Sigmoid colon (tissue), 7 donors: ENCODE measurements at regions of chr15 and their contacts with region 1.

Region 1: GRCh38 chr15:60592371-60593169 is 113.6 kb upstream of the ICE2 start:
- DNase-seq: peak; percentile 94
- H3K4me3 ChIP-seq: peak overlapping the region; percentile 73 to 93 (median 81)
- H3K27ac ChIP-seq: peak overlapping the region; percentile 84 to 95 (median 90)
- H3K4me1 ChIP-seq: peaks cover 0 to 23% (median 14%) of the 10 kb centered on the region in 4 donors
- H3K27me3 ChIP-seq: no peaks in the 10 kb centered on the region
- CTCF ChIP-seq: no peak
- EP300 ChIP-seq: peak in 1 of 4 donors; percentile 10
- POLR2A ChIP-seq: peak in 1 of 2 donors; percentile 23

Region 2: GRCh38 chr15:60397772-60398445 is 194.7 kb before region 1 on chr15 and contains the start of gene ANXA2:
- intact Hi-C with region 1: no loop called
- DNase-seq: peak; percentile 95
- H3K4me3 ChIP-seq: peak within 1 kb of the TSS; percentile 78 to 99 (median 96)
- H3K27ac ChIP-seq: peak within 1 kb of the TSS; percentile 95 to 99 (median 98)
- H3K4me1 ChIP-seq: peaks cover 3 to 46% (median 38%) of the 10 kb centered on the region in 4 donors
- H3K27me3 ChIP-seq: no peaks in the 10 kb centered on the region
- CTCF ChIP-seq: no peak
- EP300 ChIP-seq: no peak
- POLR2A ChIP-seq: peak; percentile 50 to 81
- total RNA-seq, gene ANXA2: 157 to 366 (median 214) TPM

Region 3: DNA sequence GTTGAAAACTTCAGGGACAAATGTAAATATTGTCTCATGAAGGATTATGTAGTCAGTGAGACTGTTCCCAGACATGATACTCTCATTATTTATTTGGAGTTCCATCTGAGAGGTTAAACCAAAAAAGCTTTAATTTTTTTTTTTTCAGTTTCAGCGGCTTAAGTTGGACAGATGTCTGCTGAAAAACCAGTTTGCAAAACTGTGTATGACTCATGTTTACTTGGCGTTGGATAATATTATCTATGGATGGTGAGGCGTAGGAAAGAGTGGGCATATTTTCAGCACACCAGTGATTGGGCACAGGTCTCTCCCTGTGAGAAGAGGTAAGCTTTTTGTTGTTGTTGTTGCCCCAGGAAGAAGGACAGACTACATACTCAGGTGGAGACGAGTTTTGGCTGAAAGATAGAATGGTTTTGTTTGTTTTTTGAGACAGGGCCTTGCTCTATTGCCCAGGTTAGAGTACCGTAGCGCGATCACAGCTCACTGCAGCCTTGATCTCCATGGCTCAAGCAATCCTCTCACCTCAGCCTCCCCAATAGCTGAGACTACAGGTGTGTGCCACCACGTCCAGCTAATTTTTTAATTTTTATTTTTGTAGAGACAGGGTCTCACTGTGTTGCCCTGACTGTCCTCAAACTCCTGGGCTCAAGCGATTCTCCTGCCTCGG is 178.4 kb before region 1 on chr15:
- intact Hi-C with region 1: no loop called
- DNase-seq: no peak
- H3K4me3 ChIP-seq: no peak overlapping the region
- H3K27ac ChIP-seq: no peak overlapping the region
- H3K4me1 ChIP-seq: peaks cover 0 to 14% (median 2%) of the 10 kb centered on the region in 4 donors
- H3K27me3 ChIP-seq: no peaks in the 10 kb centered on the region
- CTCF ChIP-seq: no peak
- EP300 ChIP-seq: no peak
- POLR2A ChIP-seq: no peak

Region 4: GRCh38 chr15:60682115-60682514 is 89.5 kb after region 1 on chr15:
- intact Hi-C with region 1: loop called (anchors 5 kb)
- DNase-seq: no peak
- H3K4me3 ChIP-seq: no peak overlapping the region
- H3K27ac ChIP-seq: peak overlapping the region in 2 of 4 donors; percentile 21 to 26
- H3K4me1 ChIP-seq: peaks cover 0 to 28% (median 18%) of the 10 kb centered on the region in 4 donors
- H3K27me3 ChIP-seq: no peaks in the 10 kb centered on the region
- CTCF ChIP-seq: no peak
- EP300 ChIP-seq: no peak
- POLR2A ChIP-seq: no peak

Region 5: GRCh38 chr15:61038387-61038786 is 445.8 kb after region 1 on chr15:
- intact Hi-C with region 1: loop called (anchors 5 kb)
- DNase-seq: no peak
- H3K4me3 ChIP-seq: no peak overlapping the region
- H3K27ac ChIP-seq: no peak overlapping the region
- H3K4me1 ChIP-seq: peaks cover 0 to 45% (median 39%) of the 10 kb centered on the region in 4 donors
- H3K27me3 ChIP-seq: no peaks in the 10 kb centered on the region
- CTCF ChIP-seq: no peak
- EP300 ChIP-seq: no peak
- POLR2A ChIP-seq: no peak